Right ventricle myocardium inferior (tissue), 1 donor: ENCODE measurements at regions of chr1 and their contacts with region 1.

Region 1: DNA sequence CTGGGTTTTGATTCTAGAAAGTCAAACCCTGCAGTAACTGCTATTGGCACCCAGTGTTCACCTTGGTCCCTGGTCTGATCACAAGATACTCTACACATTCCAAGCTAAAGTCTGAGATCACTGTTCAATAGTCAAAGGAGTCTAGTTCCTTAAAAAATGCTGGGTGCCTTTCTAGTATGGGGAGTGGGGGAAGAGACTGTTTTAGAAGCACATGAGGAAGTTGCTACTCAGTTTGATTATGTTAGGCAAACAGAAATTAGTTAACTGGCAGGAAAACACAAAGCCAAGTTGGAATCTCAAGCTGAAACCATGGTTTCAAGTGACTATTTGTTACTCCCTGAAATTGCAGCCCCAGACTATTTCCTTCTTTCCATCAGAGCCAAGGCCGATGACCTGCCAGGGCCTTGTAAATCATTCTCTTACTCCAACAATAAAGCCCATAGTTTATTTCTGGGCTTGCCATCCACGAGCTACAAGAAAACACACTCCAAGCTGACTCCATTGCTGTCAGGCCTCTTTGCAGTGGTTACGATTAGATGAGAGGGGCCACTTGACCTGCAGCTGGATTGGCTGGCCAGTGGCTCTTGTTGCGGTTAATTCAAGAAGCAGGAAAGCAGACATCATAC is 21.1 kb upstream of the VTCN1 start:
- DNase-seq: no peak
- ATAC-seq: no peak

Region 2: DNA sequence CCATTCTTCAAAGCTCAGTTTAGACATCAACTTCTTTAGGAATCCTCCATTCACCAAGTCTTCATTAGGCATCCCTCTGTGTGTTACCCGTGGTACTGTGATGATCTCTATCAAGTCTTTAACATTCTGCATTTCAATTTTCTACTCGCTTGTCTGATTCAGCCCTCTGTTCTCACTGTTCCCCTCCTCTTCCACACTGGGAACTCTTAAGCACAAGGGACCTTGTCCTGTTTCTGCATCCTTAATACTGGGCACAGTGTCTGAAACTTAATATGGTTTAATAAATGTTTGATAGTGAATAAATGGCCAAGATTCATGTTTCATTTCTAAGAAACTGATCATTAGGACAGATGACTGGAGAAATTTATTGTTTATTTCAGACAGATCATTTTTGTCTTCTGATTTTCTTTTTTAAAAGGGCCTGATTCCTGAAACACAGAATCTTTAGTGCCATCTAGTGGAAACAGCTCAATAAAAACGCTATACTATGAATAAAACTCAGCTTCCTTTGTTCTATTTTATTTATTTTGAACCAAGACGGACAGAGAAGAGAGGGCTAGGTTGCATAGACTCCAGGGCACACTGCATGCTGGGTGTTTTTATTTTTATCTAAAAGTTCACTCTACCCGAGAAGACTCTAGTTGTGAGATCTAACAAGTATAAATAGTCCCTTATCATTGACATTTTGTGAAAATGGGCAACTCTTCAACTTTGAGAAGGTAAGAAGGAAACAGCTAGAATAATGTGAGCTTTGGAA is 103.4 kb before region 1 on chr1:
- intact Hi-C with region 1: loop called (anchors 5 kb)
- DNase-seq: no peak
- ATAC-seq: peak; percentile 82